K562 (cell line): ENCODE measurements at regions of chr4 and their contacts with region 1.

Region 1: GRCh38 chr4:108570993-108571569 is 49.3 kb upstream of the RPL34 start:
- DNase-seq: no peak
- ATAC-seq: no peak
- H3K4me3 ChIP-seq: no peak overlapping the region
- H3K27ac ChIP-seq: no peak overlapping the region
- H3K4me1 ChIP-seq: no peaks in the 10 kb centered on the region
- H3K27me3 ChIP-seq: peaks cover 8 to 15% of the 10 kb centered on the region in 2 experiments; a peak in 3 of 5 replicates
- CTCF ChIP-seq: no peak
- EP300 ChIP-seq: no peak
- POLR2A ChIP-seq: no peak
- RAD21 ChIP-seq: no peak

Region 2: GRCh38 chr4:107757864-107758476 is 813.1 kb before region 1 on chr4:
- CTCF ChIA-PET with region 1: interaction called, 4 read pairs
- POLR2A ChIA-PET with region 1: no interaction called
- in situ Hi-C with region 1: no loop called
- intact Hi-C with region 1: loop called (anchors 5 kb)
- DNase-seq: peak in 3 of 4 experiments; percentile 15 to 23 (median 18)
- ATAC-seq: 0 out of 3 replicates have a peak, but pooled peaks have one; percentile 36
- H3K4me3 ChIP-seq: no peak overlapping the region
- H3K27ac ChIP-seq: no peak overlapping the region
- H3K4me1 ChIP-seq: no peaks in the 10 kb centered on the region
- H3K27me3 ChIP-seq: no peaks in the 10 kb centered on the region
- CTCF ChIP-seq: peak in 2 of 3 experiments; percentile 28 to 47; a peak in 3 of 6 replicates
- EP300 ChIP-seq: no peak
- POLR2A ChIP-seq: no peak
- RAD21 ChIP-seq: peak; percentile 37 to 54; a peak in 3 of 4 replicates

Region 3: DNA sequence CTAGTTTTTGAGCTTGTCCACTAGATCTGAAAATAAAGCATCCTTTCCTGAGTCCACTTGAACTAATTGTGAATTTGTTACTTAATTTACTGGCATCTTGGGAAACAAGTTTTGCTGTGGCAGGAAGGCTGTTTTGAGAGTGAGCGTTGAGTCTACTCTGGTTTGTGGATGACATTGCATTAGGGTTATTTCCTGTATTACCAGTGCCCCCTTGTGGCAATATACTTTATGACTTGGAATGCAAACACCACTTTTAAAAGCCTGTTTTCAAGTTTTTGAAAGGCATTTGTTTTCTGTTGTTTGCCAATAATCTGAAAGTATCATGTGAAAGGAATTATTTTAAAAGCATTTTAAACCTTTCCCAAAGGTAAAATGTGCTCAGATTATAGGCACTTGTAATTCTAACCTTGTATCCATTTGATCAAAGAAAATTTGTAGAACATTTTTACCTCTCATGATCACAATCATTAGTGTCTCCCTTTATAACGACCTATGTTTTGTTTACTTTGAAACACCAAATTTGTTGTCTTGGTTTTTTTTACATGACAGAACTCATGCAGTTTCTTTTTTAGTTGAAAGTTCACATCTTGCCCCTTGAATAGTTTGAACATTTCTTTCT is 657.7 kb before region 1 on chr4:
- CTCF ChIA-PET with region 1: no interaction called
- POLR2A ChIA-PET with region 1: no interaction called
- in situ Hi-C with region 1: no loop called
- intact Hi-C with region 1: loop called (anchors 10 kb)
- DNase-seq: peak; percentile 49 to 76 (median 52)
- ATAC-seq: peak; percentile 90
- H3K4me3 ChIP-seq: no peak overlapping the region
- H3K27ac ChIP-seq: no peak overlapping the region
- H3K4me1 ChIP-seq: no peaks in the 10 kb centered on the region
- H3K27me3 ChIP-seq: peaks cover 0 to 2% of the 10 kb centered on the region in 2 experiments; a peak in 1 of 5 replicates
- CTCF ChIP-seq: peak; percentile 66 to 80 (median 66)
- EP300 ChIP-seq: no peak
- POLR2A ChIP-seq: no peak
- RAD21 ChIP-seq: peak; percentile 81 to 82

Region 4: GRCh38 chr4:108018040-108018883 is 552.8 kb before region 1 on chr4:
- CTCF ChIA-PET with region 1: interaction called, 19 read pairs
- POLR2A ChIA-PET with region 1: no interaction called
- in situ Hi-C with region 1: loop called (anchors 5 kb)
- intact Hi-C with region 1: loop called (anchors 1 kb)
- DNase-seq: peak; percentile 71 to 85 (median 80)
- ATAC-seq: peak; percentile 97
- H3K4me3 ChIP-seq: no peak overlapping the region
- H3K27ac ChIP-seq: no peak overlapping the region
- H3K4me1 ChIP-seq: peaks cover 0 to 4% of the 10 kb centered on the region in 2 experiments; a peak in 3 of 5 replicates
- H3K27me3 ChIP-seq: no peaks in the 10 kb centered on the region
- CTCF ChIP-seq: peak; percentile 82 to 85 (median 84)
- EP300 ChIP-seq: no peak
- POLR2A ChIP-seq: no peak
- RAD21 ChIP-seq: peak; percentile 72 to 82

Region 5: DNA sequence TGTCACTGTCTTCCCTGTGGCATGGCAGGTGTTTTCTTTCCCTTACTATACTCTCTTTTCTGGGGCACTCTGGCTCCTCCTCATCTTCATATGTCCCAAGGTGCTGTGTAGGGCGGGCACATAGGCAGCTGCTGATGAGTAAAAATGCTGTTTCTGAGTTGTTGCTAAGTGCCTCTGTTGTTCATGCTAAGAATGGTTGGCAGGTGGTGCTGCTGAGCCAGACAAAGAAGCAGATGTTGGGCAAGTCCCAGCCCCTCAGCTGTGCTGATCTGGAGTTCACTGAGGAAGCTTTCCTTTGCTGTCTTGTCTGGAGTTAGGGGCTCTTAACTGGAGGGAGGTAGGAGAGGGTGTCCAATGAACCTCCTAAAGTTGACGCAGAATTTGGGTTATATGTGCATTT is 540.7 kb before region 1 on chr4:
- CTCF ChIA-PET with region 1: no interaction called
- POLR2A ChIA-PET with region 1: no interaction called
- in situ Hi-C with region 1: no loop called
- intact Hi-C with region 1: loop called (anchors 5 kb)
- DNase-seq: peak; percentile 40 to 69 (median 43)
- ATAC-seq: peak; percentile 97
- H3K4me3 ChIP-seq: no peak overlapping the region
- H3K27ac ChIP-seq: no peak overlapping the region
- H3K4me1 ChIP-seq: no peaks in the 10 kb centered on the region
- H3K27me3 ChIP-seq: no peaks in the 10 kb centered on the region
- CTCF ChIP-seq: peak; percentile 66 to 70 (median 67)
- EP300 ChIP-seq: no peak
- POLR2A ChIP-seq: no peak
- RAD21 ChIP-seq: peak in 1 of 2 experiments; percentile 72; a peak in 2 of 4 replicates

Region 6: DNA sequence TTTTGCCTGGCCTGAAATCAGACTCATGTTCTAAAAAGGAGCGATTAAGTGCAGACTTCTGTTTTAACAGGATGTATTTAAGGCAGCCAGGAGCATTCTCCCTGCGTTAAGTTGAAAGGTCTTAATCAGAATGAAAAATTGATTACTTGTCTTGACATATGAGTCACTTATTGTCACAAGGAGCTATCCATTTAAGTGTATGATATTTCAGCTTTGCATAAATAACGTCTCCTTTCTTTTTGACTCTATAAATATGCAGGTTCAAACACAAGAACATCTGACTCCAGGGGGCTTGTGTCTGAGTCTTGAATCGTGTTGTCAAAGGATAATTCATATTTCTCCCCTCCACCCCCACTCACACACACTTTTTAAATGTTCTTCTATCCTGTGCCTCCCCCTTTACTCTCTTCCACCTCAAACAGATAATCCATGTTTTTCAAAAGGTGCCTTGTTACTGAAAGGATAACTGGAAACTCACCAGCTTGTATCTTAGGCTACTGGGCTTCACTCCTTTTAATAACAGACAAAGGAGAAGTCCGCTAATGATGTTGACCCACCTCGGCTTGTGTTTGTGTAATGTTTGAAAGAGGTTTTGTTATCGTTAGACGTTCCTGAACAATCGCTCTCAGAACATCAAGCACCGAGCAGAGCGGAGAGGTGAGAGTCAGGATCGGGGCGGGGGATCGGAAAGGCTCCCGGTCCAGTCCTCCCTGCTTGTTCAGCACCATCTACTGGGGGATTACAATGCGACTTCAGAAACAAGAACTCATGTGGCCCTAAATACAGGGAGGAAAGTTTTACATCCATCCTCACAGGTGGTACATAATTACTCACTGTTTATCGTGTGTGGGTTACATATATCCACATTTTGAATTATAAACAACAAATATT is 58.2 kb before region 1 on chr4:
- CTCF ChIA-PET with region 1: no interaction called
- POLR2A ChIA-PET with region 1: no interaction called
- in situ Hi-C with region 1: no loop called
- intact Hi-C with region 1: loop called (anchors 5 kb)
- DNase-seq: peak; percentile 26 to 74 (median 40)
- ATAC-seq: peak; percentile 93
- H3K4me3 ChIP-seq: no peak overlapping the region
- H3K27ac ChIP-seq: no peak overlapping the region
- H3K4me1 ChIP-seq: no peaks in the 10 kb centered on the region; a peak in 1 of 5 replicates
- H3K27me3 ChIP-seq: peaks cover 0 to 18% of the 10 kb centered on the region in 2 experiments; a peak in 4 of 5 replicates
- CTCF ChIP-seq: peak; percentile 55 to 59 (median 58); a peak in 5 of 6 replicates
- EP300 ChIP-seq: no peak
- POLR2A ChIP-seq: no peak
- RAD21 ChIP-seq: peak; percentile 66 to 73

Region 7: GRCh38 chr4:108742451-108743420 is 171.7 kb after region 1 on chr4:
- CTCF ChIA-PET with region 1: no interaction called
- POLR2A ChIA-PET with region 1: no interaction called
- in situ Hi-C with region 1: no loop called
- intact Hi-C with region 1: no loop called
- DNase-seq: no peak
- ATAC-seq: peak; percentile 66
- H3K4me3 ChIP-seq: no peak overlapping the region
- H3K27ac ChIP-seq: no peak overlapping the region
- H3K4me1 ChIP-seq: no peaks in the 10 kb centered on the region; a peak in 1 of 5 replicates
- H3K27me3 ChIP-seq: peaks cover 7 to 18% of the 10 kb centered on the region in 2 experiments
- CTCF ChIP-seq: no peak
- EP300 ChIP-seq: no peak
- POLR2A ChIP-seq: no peak
- RAD21 ChIP-seq: no peak